CD4-positive, alpha-beta T cell (primary cell): ENCODE measurements at regions of chr2 and their contacts with region 1.

Region 1: DNA sequence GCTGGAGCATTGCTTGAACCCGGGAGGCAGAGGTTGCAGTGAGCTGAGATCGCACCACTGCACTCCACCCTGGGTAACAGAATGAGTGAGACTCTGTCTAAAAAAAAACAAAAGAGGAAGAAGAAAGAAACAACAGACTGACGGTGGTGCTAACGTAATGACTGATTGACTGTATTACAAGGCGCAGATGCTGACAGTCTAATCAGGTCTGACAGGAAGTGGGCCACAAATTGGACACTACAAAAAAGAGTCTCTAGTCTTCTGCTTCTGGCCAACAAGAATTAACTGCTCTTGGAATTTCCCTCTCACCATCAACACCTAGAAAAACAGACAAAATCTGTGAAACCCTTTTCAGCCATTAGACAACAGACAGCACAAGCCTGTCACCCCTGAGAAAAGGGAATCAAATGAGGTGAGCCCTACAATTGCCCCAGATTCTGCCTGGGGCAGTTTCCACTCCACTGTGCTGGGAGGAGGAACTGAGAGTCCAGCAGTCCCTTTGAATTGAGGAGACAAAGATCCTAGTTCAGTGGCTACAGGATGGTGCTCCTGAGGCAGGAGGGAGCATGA is 43.3 kb downstream of the SNED1 start:
- DNase-seq: peak in 3 of 14 experiments; percentile 22 to 40 (median 38)
- ATAC-seq: peak; percentile 31
- H3K4me3 ChIP-seq: no peak overlapping the region
- H3K4me3 Mint-ChIP-seq: peak overlapping the region; percentile 45
- H3K27ac ChIP-seq: no peak overlapping the region
- H3K27ac Mint-ChIP-seq: peak overlapping the region; percentile 78
- H3K4me1 ChIP-seq: peaks cover 28% of the 10 kb centered on the region
- H3K4me1 Mint-ChIP-seq: peaks cover 14% of the 10 kb centered on the region
- H3K27me3 ChIP-seq: no peaks in the 10 kb centered on the region
- H3K27me3 Mint-ChIP-seq: peaks cover 5% of the 10 kb centered on the region
- CTCF ChIP-seq: no peak

Region 2: DNA sequence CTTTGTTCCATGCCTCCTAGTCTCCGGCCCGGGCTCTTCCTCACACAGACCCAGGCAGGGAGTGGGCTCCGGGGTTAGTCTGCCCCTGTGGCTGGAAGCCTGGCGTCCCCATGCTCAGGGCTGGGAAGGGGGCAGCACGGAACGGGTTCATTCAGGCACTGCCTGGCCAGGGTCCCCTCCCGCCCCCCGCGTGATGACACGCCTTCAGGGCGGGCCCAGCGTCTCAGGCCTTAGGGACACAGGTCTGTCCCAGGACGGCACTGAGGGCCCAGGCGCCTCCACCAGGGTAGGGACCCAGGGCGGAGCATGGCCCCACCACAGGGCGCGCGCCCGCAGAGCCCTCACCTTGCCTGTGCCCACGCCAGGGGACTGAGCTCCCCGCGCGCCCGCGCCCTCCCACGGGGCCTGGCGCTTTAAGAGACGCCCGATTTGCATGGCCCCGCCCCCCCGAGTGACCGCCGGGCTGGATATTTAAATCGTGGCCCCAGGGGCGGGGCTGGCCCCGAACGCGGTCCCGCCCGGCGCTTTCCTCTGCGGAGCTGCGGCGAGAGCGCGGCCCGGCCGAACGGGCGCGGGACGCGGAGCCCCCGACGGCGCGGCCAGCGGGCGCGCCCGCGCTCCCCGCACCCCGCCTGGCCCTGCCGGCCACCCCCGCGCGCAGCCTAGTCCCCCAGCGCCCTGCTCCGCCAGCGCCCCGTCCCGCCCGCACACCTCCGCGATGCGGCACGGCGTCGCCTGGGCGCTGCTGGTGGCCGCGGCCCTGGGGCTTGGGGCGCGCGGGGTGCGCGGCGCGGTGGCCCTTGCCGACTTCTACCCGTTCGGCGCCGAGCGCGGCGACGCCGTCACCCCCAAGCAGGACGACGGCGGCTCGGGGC is 43.3 kb before region 1 on chr2 and contains the start of gene SNED1:
- CTCF ChIA-PET with region 1: no interaction called
- POLR2A ChIA-PET with region 1: no interaction called
- intact Hi-C with region 1: loop called in 1 of 2 experiments (anchors 10 kb)
- DNase-seq: peak in 13 of 14 experiments; percentile 24 to 74 (median 49)
- ATAC-seq: peak; percentile 63
- H3K4me3 ChIP-seq: peak within 1 kb of the TSS; percentile 52
- H3K4me3 Mint-ChIP-seq: peak within 1 kb of the TSS; percentile 84
- H3K27ac ChIP-seq: no peak within 1 kb of the TSS
- H3K27ac Mint-ChIP-seq: peak within 1 kb of the TSS; percentile 86
- H3K4me1 ChIP-seq: peaks cover 9% of the 10 kb centered on the region
- H3K4me1 Mint-ChIP-seq: peaks cover 18% of the 10 kb centered on the region
- H3K27me3 ChIP-seq: peaks cover 0 to 25% of the 10 kb centered on the region in 2 experiments
- H3K27me3 Mint-ChIP-seq: peaks cover 34% of the 10 kb centered on the region
- CTCF ChIP-seq: no peak
- total RNA-seq, gene SNED1: 42.0 to 42.7 TPM